Activated CD8-positive, alpha-beta T cell treated with anti-CD3 and anti-CD28 coated beads for 36 hours (primary cell): ENCODE measurements at regions of chr1 and their contacts with region 1.

Region 1: GRCh38 chr1:160806109-160806665 is 10.2 kb downstream of the LY9 start:
- DNase-seq: no peak
- ATAC-seq: peak; percentile 45
- H3K4me3 Mint-ChIP-seq: no peak overlapping the region
- H3K27ac Mint-ChIP-seq: peak overlapping the region; percentile 82
- H3K4me1 Mint-ChIP-seq: peaks cover 83% of the 10 kb centered on the region
- H3K27me3 Mint-ChIP-seq: no peaks in the 10 kb centered on the region
- CTCF ChIP-seq: peak; percentile 46

Region 2: GRCh38 chr1:160795951-160796383 is 10.2 kb before region 1 on chr1 and contains the start of gene LY9:
- CTCF ChIA-PET with region 1: interaction called, 19 read pairs
- POLR2A ChIA-PET with region 1: interaction called, 6 read pairs
- intact Hi-C with region 1: no loop called
- DNase-seq: peak; percentile 93
- ATAC-seq: peak; percentile 77
- H3K4me3 Mint-ChIP-seq: peak within 1 kb of the TSS; percentile 87
- H3K27ac Mint-ChIP-seq: peak within 1 kb of the TSS; percentile 95
- H3K4me1 Mint-ChIP-seq: peaks cover 49% of the 10 kb centered on the region
- H3K27me3 Mint-ChIP-seq: no peaks in the 10 kb centered on the region
- CTCF ChIP-seq: no peak
- total RNA-seq, gene LY9: 19.1 to 19.5 TPM

Region 3: GRCh38 chr1:160874935-160875334 is 68.7 kb after region 1 on chr1:
- CTCF ChIA-PET with region 1: no interaction called
- POLR2A ChIA-PET with region 1: no interaction called
- intact Hi-C with region 1: no loop called
- DNase-seq: peak; percentile 33
- ATAC-seq: peak; percentile 82
- H3K4me3 Mint-ChIP-seq: no peak overlapping the region
- H3K27ac Mint-ChIP-seq: peak overlapping the region; percentile 9
- H3K4me1 Mint-ChIP-seq: peaks cover 30% of the 10 kb centered on the region
- H3K27me3 Mint-ChIP-seq: no peaks in the 10 kb centered on the region
- CTCF ChIP-seq: no peak